BJ (cell line): ENCODE measurements at regions of chr9 and their contacts with region 1.

Region 1: GRCh38 chr9:126398403-126399058 is 71.9 kb downstream of the MVB12B start:
- DNase-seq: no peak
- H3K4me3 ChIP-seq: no peak overlapping the region
- H3K27me3 ChIP-seq: no peaks in the 10 kb centered on the region
- CTCF ChIP-seq: peak; percentile 99

Region 2: GRCh38 chr9:126301985-126302603 is 96.4 kb before region 1 on chr9:
- CTCF ChIA-PET with region 1: interaction called, 109 read pairs
- POLR2A ChIA-PET with region 1: no interaction called
- DNase-seq: peak; percentile 7
- H3K4me3 ChIP-seq: no peak overlapping the region
- H3K27me3 ChIP-seq: peaks cover 8% of the 10 kb centered on the region
- CTCF ChIP-seq: peak; percentile 88

Region 3: GRCh38 chr9:126317513-126317912 is 81.0 kb before region 1 on chr9:
- CTCF ChIA-PET with region 1: interaction called, 34 read pairs
- POLR2A ChIA-PET with region 1: no interaction called
- DNase-seq: no peak
- H3K4me3 ChIP-seq: no peak overlapping the region
- H3K27me3 ChIP-seq: peaks cover 2% of the 10 kb centered on the region; the same call in 1 of the 2 replicates
- CTCF ChIP-seq: peak; percentile 18; the same call in 1 of the 2 replicates

Region 4: GRCh38 chr9:126386088-126386487 is 12.4 kb before region 1 on chr9:
- CTCF ChIA-PET with region 1: interaction called, 33 read pairs
- POLR2A ChIA-PET with region 1: no interaction called
- DNase-seq: no peak
- H3K4me3 ChIP-seq: no peak overlapping the region
- H3K27me3 ChIP-seq: no peaks in the 10 kb centered on the region
- CTCF ChIP-seq: peak; percentile 33; the same call in 1 of the 2 replicates

Region 5: DNA sequence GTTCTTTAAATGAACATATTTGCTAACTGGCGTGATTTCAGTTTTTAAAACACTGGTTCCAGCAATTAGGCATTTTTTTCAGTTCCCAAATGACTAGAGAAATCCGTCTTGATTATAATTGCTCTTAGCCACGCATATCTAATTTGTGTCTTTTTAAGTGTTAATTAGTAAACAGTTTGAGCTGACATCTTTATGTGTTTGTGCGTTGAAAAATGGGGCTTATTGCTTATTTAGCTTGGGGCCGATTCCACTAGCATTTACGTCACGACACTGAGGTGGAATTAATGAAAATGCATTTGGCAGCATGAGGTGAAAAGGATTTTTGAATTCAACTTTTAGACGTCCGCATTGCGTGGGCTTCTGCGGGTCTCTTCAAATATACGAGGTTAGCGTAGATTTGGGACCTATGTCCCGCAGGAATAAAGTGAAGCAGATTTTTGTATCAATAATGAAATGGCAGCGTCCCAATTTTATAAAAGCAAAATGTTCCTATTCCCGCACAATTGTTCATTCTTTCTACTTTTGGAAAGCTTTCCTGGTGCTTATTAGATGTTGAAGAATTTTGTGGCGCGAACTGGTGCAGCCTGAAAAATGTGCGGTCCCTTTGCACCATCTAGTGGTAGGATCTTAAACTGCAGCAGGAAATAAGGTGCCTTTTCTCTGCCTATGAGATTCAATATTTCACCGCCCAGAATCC is 92.5 kb after region 1 on chr9:
- CTCF ChIA-PET with region 1: interaction called, 44 read pairs
- POLR2A ChIA-PET with region 1: no interaction called
- DNase-seq: no peak
- H3K4me3 ChIP-seq: no peak overlapping the region
- H3K27me3 ChIP-seq: no peaks in the 10 kb centered on the region
- CTCF ChIP-seq: peak; percentile 89

Region 6: DNA sequence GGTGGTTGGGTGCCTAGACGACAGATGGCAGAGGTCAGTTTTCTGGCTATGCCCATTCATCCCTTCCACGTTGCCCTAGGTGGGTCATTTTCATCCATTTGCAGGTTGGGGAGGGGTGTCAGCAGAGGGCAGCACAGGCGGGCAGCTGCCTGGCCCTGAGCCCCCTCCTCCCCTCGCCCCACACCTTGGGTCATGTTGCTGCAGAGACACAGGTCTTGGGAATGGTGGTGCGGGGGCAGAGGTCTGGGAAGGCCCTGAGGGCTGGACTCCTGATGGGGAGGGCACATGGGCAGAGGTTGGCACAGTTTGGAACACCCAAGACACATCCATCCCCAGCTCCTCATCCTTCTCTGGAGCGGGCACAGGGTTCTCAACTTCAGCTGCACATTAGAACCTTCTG is 112.0 kb after region 1 on chr9:
- CTCF ChIA-PET with region 1: no interaction called
- POLR2A ChIA-PET with region 1: no interaction called
- DNase-seq: no peak
- H3K4me3 ChIP-seq: no peak overlapping the region
- H3K27me3 ChIP-seq: peaks cover 3% of the 10 kb centered on the region; the same call in 1 of the 2 replicates
- CTCF ChIP-seq: no peak

Region 7: GRCh38 chr9:126704873-126705766 is 306.6 kb after region 1 on chr9:
- CTCF ChIA-PET with region 1: no interaction called
- POLR2A ChIA-PET with region 1: no interaction called
- DNase-seq: no peak
- H3K4me3 ChIP-seq: no peak overlapping the region
- H3K27me3 ChIP-seq: peaks cover 10% of the 10 kb centered on the region
- CTCF ChIP-seq: peak; percentile 92

Region 8: DNA sequence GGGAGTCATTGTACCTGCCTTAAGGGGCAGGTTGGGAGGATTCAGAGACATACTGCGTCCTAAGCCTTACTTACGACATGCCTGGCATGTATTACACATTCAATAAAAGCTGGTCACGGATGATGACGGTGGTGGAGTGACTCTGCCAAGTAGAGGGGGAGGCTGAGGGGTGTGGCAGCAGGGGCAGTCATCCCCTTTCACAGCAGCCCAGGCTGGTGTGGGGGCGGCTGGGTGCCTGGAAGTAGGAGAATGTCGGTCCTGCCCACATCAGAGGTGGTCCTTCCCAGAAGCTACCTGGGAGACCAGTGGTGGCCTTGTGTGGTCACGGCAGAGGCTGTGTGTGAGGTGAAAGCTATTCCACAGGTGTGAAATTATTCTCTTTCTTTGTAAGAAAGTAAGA is 470.8 kb after region 1 on chr9:
- CTCF ChIA-PET with region 1: no interaction called
- POLR2A ChIA-PET with region 1: no interaction called
- DNase-seq: no peak
- H3K4me3 ChIP-seq: no peak overlapping the region
- H3K27me3 ChIP-seq: no peaks in the 10 kb centered on the region
- CTCF ChIP-seq: no peak